ENCODE measurements at regions of chr18 and their contacts with region 1.

Region 1: GRCh38 chr18:57881818-57882413 is 78.8 kb upstream of the ATP8B1 start:
- DNase-seq: peak; percentile 61
- H3K4me3 ChIP-seq: no peak overlapping the region
- H3K27ac ChIP-seq: no peak overlapping the region
- H3K4me1 ChIP-seq: no peaks in the 10 kb centered on the region
- H3K27me3 ChIP-seq: no peaks in the 10 kb centered on the region
- CTCF ChIP-seq: peak; percentile 97

Region 2: DNA sequence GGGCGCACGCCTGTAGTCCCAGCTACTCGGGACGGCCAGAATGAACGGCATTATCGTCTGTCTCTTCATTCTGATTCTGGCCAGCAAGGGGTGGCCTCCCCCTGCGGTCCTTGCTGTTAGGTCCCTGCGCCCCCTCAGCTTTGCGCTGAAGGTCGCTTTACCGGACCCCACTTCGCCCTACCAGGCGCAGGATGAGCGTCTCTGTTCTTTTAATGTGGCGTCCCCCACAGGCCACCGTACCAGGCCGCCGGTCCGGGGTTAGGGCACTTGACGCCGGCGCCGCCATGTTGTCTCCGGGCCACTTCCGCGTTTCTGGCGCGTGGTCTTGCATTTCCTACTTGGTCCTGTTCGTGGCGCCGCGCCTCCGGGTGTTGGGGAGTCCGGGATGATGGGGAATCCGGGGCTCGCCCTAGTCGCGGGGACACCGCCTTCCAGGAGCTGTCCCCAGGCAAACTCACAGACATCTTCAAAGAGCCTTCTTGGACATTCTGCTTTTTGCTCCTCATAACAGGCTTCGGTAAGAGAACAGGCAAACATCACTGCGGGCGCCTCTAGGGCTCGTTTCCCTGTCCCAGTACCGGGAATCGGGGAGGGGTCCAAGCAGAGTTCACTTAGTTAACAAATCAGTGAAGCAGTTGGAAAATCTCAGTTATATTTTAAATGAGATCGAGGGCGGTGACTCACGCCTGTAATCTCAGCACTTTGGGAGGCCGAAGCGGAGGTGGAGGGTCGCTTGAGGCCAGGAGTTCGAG is 251.7 kb before region 1 on chr18:
- CTCF ChIA-PET with region 1: no interaction called
- dilution Hi-C with region 1: no loop called
- in situ Hi-C with region 1: no loop called
- intact Hi-C with region 1: loop called (anchors 1 kb)
- DNase-seq: peak; percentile 93
- H3K4me3 ChIP-seq: peak overlapping the region; percentile 64 to 79 (median 68)
- H3K27ac ChIP-seq: peak overlapping the region; percentile 45
- H3K4me1 ChIP-seq: peaks cover 14% of the 10 kb centered on the region
- H3K27me3 ChIP-seq: no peaks in the 10 kb centered on the region
- CTCF ChIP-seq: peak; percentile 53 to 82

Region 3: GRCh38 chr18:57846258-57846657 is 35.7 kb before region 1 on chr18:
- CTCF ChIA-PET with region 1: no interaction called
- dilution Hi-C with region 1: no loop called
- in situ Hi-C with region 1: no loop called
- intact Hi-C with region 1: no loop called
- DNase-seq: peak; percentile 33
- H3K4me3 ChIP-seq: no peak overlapping the region
- H3K27ac ChIP-seq: no peak overlapping the region
- H3K4me1 ChIP-seq: peaks cover 13% of the 10 kb centered on the region
- H3K27me3 ChIP-seq: no peaks in the 10 kb centered on the region
- CTCF ChIP-seq: no peak

Region 4: DNA sequence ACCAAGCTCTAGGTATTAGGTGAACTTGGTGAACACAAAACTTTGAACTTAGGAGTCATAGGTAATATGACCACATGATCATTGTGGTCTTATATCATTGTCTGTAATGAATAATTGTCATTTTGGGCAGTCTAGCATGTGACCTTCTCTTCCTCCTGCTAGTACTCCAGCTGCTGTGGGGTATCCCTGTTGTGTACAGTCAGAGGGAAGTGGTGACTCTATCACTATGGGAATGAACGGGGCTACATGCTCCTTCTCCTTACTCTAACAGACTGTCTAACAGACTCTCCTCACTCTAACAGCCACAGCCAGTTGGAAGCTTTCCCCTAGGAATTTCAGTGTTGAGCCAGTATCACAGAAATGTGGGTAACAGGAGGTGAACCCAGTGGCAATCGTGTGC is 93.9 kb after region 1 on chr18:
- CTCF ChIA-PET with region 1: no interaction called
- dilution Hi-C with region 1: loop called (anchors 5 kb)
- in situ Hi-C with region 1: no loop called
- intact Hi-C with region 1: no loop called
- DNase-seq: no peak
- H3K4me3 ChIP-seq: no peak overlapping the region
- H3K27ac ChIP-seq: no peak overlapping the region
- H3K4me1 ChIP-seq: peaks cover 5% of the 10 kb centered on the region
- H3K27me3 ChIP-seq: no peaks in the 10 kb centered on the region
- CTCF ChIP-seq: no peak

Region 5: DNA sequence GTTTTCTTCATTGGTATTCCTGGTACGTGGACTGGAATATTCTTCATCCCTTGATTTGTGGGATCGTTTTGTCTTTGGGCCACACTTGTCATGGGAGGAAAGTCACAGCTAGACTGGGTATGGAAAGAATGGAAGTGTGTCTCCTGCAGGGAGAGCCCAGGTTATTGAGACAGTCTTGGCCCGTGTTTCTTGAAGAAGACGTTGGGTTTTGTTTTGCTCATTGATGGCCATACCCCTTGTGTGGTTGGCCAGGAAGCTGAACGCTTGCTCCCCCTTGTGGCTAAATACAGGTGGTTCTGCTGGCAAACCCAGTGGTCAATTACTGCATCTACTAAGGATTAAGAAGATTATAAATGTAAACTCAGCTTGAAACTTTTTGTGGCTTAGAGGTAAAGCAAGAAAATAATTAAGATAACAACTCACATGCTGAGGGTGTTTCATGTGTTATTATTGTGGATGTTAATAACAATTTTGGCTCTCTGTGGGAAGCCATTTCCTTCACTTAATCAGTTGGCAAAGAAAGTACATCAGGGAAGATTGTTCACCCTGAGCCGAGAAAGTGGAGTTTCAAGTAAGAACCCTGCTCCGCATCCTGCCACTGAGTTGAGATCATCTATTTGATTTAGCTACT is 253.9 kb after region 1 on chr18:
- CTCF ChIA-PET with region 1: no interaction called
- dilution Hi-C with region 1: no loop called
- in situ Hi-C with region 1: loop called (anchors 10 kb)
- intact Hi-C with region 1: loop called (anchors 1 kb)
- DNase-seq: peak; percentile 52
- H3K4me3 ChIP-seq: no peak overlapping the region
- H3K27ac ChIP-seq: no peak overlapping the region
- H3K4me1 ChIP-seq: peaks cover 11% of the 10 kb centered on the region
- H3K27me3 ChIP-seq: no peaks in the 10 kb centered on the region
- CTCF ChIP-seq: peak; percentile 90 to 98

Region 6: GRCh38 chr18:58321986-58322385 is 440.1 kb after region 1 on chr18:
- CTCF ChIA-PET with region 1: no interaction called
- dilution Hi-C with region 1: no loop called
- in situ Hi-C with region 1: no loop called
- intact Hi-C with region 1: loop called (anchors 5 kb)
- DNase-seq: peak; percentile 86
- H3K4me3 ChIP-seq: no peak overlapping the region
- H3K27ac ChIP-seq: peak overlapping the region; percentile 83
- H3K4me1 ChIP-seq: peaks cover 14% of the 10 kb centered on the region
- H3K27me3 ChIP-seq: no peaks in the 10 kb centered on the region
- CTCF ChIP-seq: peak; percentile 65 to 68